ENCODE measurements at regions of chr15 and their contacts with region 1.

Region 1: DNA sequence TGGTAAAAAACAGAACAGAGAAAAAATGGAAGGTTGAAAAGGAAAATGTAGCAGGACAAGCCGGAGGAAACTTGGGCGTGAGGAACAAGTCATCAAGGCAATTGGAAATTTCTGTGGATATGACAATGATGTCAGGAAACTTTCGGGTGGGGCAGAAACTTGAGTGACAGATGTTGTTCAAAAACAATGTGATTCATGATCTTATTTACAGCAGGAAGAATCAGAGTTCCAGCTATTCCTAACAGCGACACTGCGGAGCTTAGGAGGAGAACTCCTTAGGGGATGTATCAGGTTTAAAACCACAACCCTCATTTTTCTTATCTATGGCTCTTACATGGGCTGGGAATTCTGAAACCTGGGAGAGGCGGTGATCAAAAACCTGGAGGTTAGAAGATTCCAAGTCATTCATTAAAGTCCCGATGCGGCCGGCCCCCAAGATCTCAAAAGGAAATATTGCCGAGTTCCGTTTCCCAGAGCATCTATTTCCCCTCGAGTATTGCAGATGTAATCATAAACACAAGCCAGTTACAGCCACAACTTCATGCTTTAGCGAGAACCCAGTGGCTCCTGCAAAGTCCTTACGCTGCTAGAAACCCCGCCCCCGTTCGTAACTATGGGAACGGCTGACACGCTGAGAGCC is 659 bp upstream of the ARRDC4 start:
- DNase-seq: no peak
- H3K4me3 ChIP-seq: peak overlapping the region; percentile 36 to 92
- H3K27ac ChIP-seq: peak overlapping the region; percentile 71
- H3K4me1 ChIP-seq: peaks cover 35% of the 10 kb centered on the region
- H3K27me3 ChIP-seq: no peaks in the 10 kb centered on the region
- CTCF ChIP-seq: no peak
- POLR2A ChIP-seq: peak in 1 of 2 donors; percentile 18

Region 2: GRCh38 chr15:96356494-96357455 is 1603.1 kb before region 1 on chr15:
- intact Hi-C with region 1: loop called (anchors 5 kb)
- DNase-seq: peak in 1 of 2 donors; percentile 72
- H3K4me3 ChIP-seq: peak overlapping the region; percentile 59 to 68
- H3K27ac ChIP-seq: peak overlapping the region; percentile 99
- H3K4me1 ChIP-seq: peaks cover 56% of the 10 kb centered on the region
- H3K27me3 ChIP-seq: no peaks in the 10 kb centered on the region
- CTCF ChIP-seq: peak; percentile 88 to 91 (median 88)
- POLR2A ChIP-seq: no peak

Region 3: GRCh38 chr15:97747342-97747741 is 212.5 kb before region 1 on chr15:
- intact Hi-C with region 1: no loop called
- DNase-seq: no peak
- H3K4me3 ChIP-seq: no peak overlapping the region
- H3K27ac ChIP-seq: no peak overlapping the region
- H3K4me1 ChIP-seq: no peaks in the 10 kb centered on the region
- H3K27me3 ChIP-seq: no peaks in the 10 kb centered on the region
- CTCF ChIP-seq: no peak
- POLR2A ChIP-seq: no peak